ENCODE measurements at regions of chr2 and their contacts with region 1.

Region 1: GRCh38 chr2:101983928-101984327 is 7.8 kb upstream of the IL1R2 start:
- DNase-seq: peak; percentile 40
- ATAC-seq: peak; percentile 27
- H3K4me3 ChIP-seq: no peak overlapping the region
- H3K27ac ChIP-seq: no peak overlapping the region
- H3K4me1 ChIP-seq: peaks cover 49% of the 10 kb centered on the region
- H3K27me3 ChIP-seq: peaks cover 3 to 15% of the 10 kb centered on the region in 2 experiments; a peak in 3 of 5 replicates
- CTCF ChIP-seq: peak; percentile 62
- EP300 ChIP-seq: no peak
- POLR2A ChIP-seq: no peak
- RAD21 ChIP-seq: peak; percentile 70; the same call in 1 of the 2 replicates

Region 2: DNA sequence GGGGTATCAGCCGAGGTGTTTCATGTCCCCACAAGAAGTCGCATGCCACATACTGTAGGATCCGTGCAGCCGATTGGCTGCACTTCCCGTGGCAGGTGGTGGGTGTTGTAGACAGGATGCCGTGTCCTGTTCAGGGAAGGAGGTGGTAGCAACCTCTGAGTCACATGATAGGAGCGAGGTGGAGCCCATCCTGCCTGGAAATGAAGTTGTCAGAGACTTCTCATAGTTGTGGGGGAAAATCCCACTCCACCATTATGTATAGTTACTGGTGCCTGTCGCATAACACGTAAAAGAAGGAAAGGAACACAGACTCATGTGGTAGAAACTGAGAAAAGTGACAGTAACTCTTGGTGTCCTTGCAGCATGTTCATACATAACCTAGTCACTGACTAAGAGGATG is 83.6 kb before region 1 on chr2:
- CTCF ChIA-PET with region 1: no interaction called
- POLR2A ChIA-PET with region 1: no interaction called
- in situ Hi-C with region 1: loop called (anchors 5 kb)
- intact Hi-C with region 1: loop called (anchors 5 kb)
- DNase-seq: no peak
- ATAC-seq: peak; percentile 6
- H3K4me3 ChIP-seq: no peak overlapping the region
- H3K27ac ChIP-seq: no peak overlapping the region
- H3K4me1 ChIP-seq: peaks cover 16% of the 10 kb centered on the region
- H3K27me3 ChIP-seq: no peaks in the 10 kb centered on the region
- CTCF ChIP-seq: no peak
- EP300 ChIP-seq: no peak
- POLR2A ChIP-seq: no peak; a peak in 2 of 4 replicates
- RAD21 ChIP-seq: no peak

Region 3: GRCh38 chr2:101931404-101931803 is 52.5 kb before region 1 on chr2:
- CTCF ChIA-PET with region 1: no interaction called
- POLR2A ChIA-PET with region 1: no interaction called
- in situ Hi-C with region 1: no loop called
- intact Hi-C with region 1: loop called (anchors 10 kb)
- DNase-seq: no peak
- ATAC-seq: no peak
- H3K4me3 ChIP-seq: no peak overlapping the region
- H3K27ac ChIP-seq: no peak overlapping the region
- H3K4me1 ChIP-seq: peaks cover 12% of the 10 kb centered on the region
- H3K27me3 ChIP-seq: 0 out of 5 replicates have a peak, but pooled peaks cover 2 to 4% of the 10 kb centered on the region in 2 experiments
- CTCF ChIP-seq: no peak
- EP300 ChIP-seq: no peak
- POLR2A ChIP-seq: no peak
- RAD21 ChIP-seq: no peak

Region 4: GRCh38 chr2:101961296-101962191 is 22.4 kb before region 1 on chr2:
- CTCF ChIA-PET with region 1: no interaction called
- POLR2A ChIA-PET with region 1: interaction called, 27 read pairs
- in situ Hi-C with region 1: no loop called
- intact Hi-C with region 1: loop called (anchors 2 kb)
- DNase-seq: peak; percentile 95
- ATAC-seq: peak; percentile 89
- H3K4me3 ChIP-seq: peak overlapping the region; percentile 18 to 65 (median 37); a peak in 5 of 6 replicates
- H3K27ac ChIP-seq: peak overlapping the region; percentile 80
- H3K4me1 ChIP-seq: peaks cover 35% of the 10 kb centered on the region
- H3K27me3 ChIP-seq: no peaks in the 10 kb centered on the region
- CTCF ChIP-seq: peak; percentile 36
- EP300 ChIP-seq: peak; percentile 68 to 85
- POLR2A ChIP-seq: peak in 1 of 2 experiments; percentile 46; a peak in 1 of 4 replicates
- RAD21 ChIP-seq: no peak; the same call in 1 of the 2 replicates

Region 5: GRCh38 chr2:102197389-102198137 is 213.6 kb after region 1 on chr2:
- CTCF ChIA-PET with region 1: no interaction called
- POLR2A ChIA-PET with region 1: no interaction called
- in situ Hi-C with region 1: no loop called
- intact Hi-C with region 1: no loop called
- DNase-seq: no peak
- ATAC-seq: no peak
- H3K4me3 ChIP-seq: no peak overlapping the region
- H3K27ac ChIP-seq: no peak overlapping the region
- H3K4me1 ChIP-seq: peaks cover 24% of the 10 kb centered on the region
- H3K27me3 ChIP-seq: peaks cover 0 to 7% of the 10 kb centered on the region in 2 experiments; a peak in 3 of 5 replicates
- CTCF ChIP-seq: no peak
- EP300 ChIP-seq: no peak
- POLR2A ChIP-seq: no peak
- RAD21 ChIP-seq: no peak

Measured in HepG2 (cell line).